Common myeloid progenitor, CD34-positive (primary cell): ENCODE measurements at regions of chr9 and their contacts with region 1.

Region 1: DNA sequence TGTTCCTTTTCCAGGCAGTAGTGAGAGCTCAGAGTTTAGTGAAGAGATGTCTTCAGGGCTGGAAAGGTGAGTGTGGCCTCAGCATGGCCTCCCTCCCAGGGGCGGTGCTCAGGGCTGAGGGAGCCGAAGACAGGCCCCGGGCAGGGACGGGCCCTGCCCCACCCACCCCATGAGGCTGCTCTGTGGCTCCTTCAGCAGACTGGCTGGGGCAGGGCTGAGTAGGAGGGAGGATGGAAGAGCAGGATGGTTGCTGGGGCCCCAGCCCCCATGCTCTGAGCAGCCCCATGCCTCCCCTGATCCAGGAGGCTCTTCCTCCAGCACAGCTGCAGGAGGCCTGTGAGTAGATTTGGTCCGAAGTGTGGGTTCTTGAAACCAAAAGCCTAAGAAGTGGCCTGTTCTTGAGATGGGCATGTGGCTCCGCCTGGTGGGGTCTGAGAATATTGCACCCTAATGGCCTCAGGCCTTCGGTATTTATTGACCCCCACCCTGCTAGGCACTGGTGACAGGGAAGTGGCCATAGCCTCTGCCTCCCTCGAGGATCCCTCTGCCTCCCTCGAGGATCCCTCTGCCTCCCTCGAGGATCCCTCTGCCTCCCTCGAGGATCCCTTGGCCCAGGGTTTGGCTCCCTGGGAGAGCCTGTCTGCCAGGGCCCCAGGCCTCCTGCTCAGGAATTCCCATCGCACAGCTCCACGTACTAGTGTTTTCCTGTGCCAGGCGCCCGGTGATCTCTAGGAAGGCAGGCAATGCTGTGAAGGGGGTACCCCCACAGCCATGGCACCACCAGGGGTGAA is 65.4 kb upstream of the GARNL3 start:
- DNase-seq: peak; percentile 67 to 86 (median 77)
- H3K4me3 ChIP-seq: no peak overlapping the region
- H3K27ac ChIP-seq: no peak overlapping the region
- H3K4me1 ChIP-seq: no peaks in the 10 kb centered on the region
- H3K27me3 ChIP-seq: peaks cover 0 to 8% (median 0%) of the 10 kb centered on the region in 5 experiments

Region 2: GRCh38 chr9:126874546-126875311 is 324.5 kb before region 1 on chr9:
- CTCF ChIA-PET with region 1: no interaction called
- POLR2A ChIA-PET with region 1: no interaction called
- DNase-seq: peak in 1 of 3 donors; percentile 39
- H3K4me3 ChIP-seq: no peak overlapping the region
- H3K27ac ChIP-seq: no peak overlapping the region
- H3K4me1 ChIP-seq: peaks cover 0 to 12% (median 1%) of the 10 kb centered on the region in 4 experiments
- H3K27me3 ChIP-seq: no peaks in the 10 kb centered on the region

Region 3: GRCh38 chr9:126939821-126940221 is 259.4 kb before region 1 on chr9:
- CTCF ChIA-PET with region 1: interaction called, 161 read pairs
- POLR2A ChIA-PET with region 1: no interaction called
- DNase-seq: no peak
- H3K4me3 ChIP-seq: no peak overlapping the region
- H3K27ac ChIP-seq: no peak overlapping the region
- H3K4me1 ChIP-seq: no peaks in the 10 kb centered on the region
- H3K27me3 ChIP-seq: peaks cover 0 to 13% (median 0%) of the 10 kb centered on the region in 5 experiments

Region 4: DNA sequence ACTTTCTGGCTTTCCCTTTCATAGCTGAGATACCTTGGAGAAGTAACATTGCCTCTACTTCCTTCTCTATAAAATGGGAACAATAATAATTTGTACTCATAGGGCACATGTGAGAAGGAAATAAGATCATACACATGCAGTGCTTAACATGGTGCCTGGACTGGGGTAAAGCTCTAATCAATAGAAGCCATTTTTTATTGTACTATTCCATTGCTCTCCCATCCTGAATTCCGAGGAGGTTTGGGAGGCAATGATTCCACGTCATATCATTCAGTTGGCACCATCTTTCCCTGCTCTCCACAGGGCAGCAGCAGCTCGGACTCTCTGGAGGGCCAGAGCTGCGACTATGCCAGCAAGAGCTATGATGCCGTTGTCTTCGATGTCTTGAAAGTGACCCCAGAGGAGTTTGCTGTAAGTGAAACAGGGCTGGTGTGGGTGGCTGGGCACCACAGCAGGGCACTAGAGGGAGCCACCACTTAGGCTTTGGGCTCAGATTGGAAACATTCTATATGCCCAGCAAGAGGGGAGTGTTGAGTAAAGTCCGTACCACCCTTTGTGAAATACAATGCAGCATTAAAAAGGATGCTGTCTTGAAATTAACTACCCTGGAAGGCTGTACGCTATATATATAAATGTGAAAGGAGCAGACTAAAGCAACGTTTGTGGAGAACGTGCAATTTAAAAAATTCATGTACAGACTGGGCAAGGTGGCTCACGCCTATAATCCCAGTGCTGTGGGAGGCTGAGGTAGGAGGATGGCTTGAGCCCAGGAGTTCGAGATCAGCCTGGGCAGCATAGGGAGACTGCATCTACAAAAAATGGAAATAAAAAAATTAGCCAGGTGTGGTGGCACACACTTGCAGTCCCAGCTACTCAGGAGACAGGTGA is 233.4 kb before region 1 on chr9:
- CTCF ChIA-PET with region 1: interaction called, 37 read pairs
- POLR2A ChIA-PET with region 1: no interaction called
- DNase-seq: peak; percentile 49 to 67 (median 61)
- H3K4me3 ChIP-seq: no peak overlapping the region
- H3K27ac ChIP-seq: no peak overlapping the region
- H3K4me1 ChIP-seq: no peaks in the 10 kb centered on the region
- H3K27me3 ChIP-seq: peaks cover 0 to 8% (median 1%) of the 10 kb centered on the region in 5 experiments

Region 5: DNA sequence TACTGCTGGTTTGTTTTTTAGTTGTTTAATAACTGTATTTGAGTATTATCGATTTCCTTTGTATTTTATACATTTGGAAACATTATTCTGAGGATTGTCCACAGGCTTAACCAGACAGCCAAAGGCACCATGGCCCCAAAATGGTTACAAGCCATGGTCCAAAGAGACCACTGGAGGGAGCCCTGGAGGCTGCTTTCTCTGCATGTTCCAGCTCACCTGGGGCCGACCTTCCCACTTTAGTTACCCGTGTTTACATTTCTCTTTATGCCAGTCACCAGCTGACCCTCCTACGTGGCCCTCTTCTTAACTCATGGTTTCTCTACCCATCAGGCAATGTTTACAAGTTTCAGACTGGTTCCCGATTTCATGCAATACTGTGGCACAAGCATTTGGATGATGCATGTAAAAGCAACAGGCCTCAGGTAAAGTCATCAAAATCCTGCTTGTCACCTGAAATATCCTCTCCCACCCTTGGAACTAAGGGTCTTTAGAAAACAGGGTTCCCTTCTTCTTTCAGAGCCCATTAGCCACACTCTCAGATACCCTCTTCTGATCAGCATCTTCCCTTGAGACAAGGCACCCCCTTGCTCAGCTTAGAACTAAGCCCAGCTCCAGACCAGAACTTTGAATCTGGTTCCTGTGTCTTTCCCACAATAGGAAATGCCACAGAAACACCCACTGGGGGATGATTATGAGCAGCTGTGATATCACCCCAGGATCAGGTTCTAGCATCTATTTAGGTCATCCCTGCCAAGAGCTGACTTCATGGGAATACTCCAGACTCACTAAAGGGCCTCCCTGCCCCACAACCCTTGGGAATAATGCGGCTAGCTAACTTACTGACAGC is 15.4 kb after region 1 on chr9:
- CTCF ChIA-PET with region 1: interaction called, 11 read pairs
- POLR2A ChIA-PET with region 1: no interaction called
- DNase-seq: peak; percentile 45 to 66 (median 57)
- H3K4me3 ChIP-seq: no peak overlapping the region
- H3K27ac ChIP-seq: no peak overlapping the region
- H3K4me1 ChIP-seq: no peaks in the 10 kb centered on the region
- H3K27me3 ChIP-seq: peaks cover 0 to 5% (median 0%) of the 10 kb centered on the region in 5 experiments